CD4-positive, alpha-beta T cell (primary cell): ENCODE measurements at regions of chr15 and their contacts with region 1.

Region 1: DNA sequence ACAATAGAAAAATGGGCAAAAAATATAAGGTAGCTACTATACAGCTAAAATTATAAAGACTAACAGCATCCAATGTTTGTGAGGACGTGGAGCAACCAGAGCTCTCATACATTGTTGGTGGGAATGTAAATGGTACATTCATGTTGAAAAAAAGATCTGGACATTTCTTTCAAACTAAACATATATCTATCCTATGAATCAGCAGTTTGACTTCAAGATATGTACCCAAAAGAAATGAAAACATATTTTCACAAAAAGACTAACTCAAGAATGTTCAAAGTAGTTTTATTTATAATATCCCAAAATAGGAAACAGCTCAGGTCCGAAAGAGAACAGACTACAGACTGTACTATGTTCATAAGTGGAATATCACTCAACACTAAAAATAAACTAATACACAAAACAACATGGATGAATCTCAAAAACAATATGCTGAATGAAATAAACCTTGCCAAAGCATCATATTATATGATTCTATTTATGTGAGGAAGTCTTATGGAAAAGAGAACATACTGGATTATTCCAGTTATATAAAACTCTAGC is 8.8 kb upstream of the TTBK2 start:
- DNase-seq: no peak
- ATAC-seq: no peak
- H3K4me3 ChIP-seq: no peak overlapping the region
- H3K4me3 Mint-ChIP-seq: no peak overlapping the region
- H3K27ac ChIP-seq: no peak overlapping the region
- H3K27ac Mint-ChIP-seq: no peak overlapping the region
- H3K4me1 ChIP-seq: no peaks in the 10 kb centered on the region
- H3K4me1 Mint-ChIP-seq: no peaks in the 10 kb centered on the region
- H3K27me3 ChIP-seq: no peaks in the 10 kb centered on the region
- H3K27me3 Mint-ChIP-seq: no peaks in the 10 kb centered on the region
- CTCF ChIP-seq: no peak

Region 2: GRCh38 chr15:42796955-42797779 is 132.2 kb before region 1 on chr15:
- CTCF ChIA-PET with region 1: interaction called, 3 read pairs
- POLR2A ChIA-PET with region 1: no interaction called
- intact Hi-C with region 1: loop called (anchors 5 kb)
- DNase-seq: no peak
- ATAC-seq: no peak
- H3K4me3 ChIP-seq: no peak overlapping the region
- H3K4me3 Mint-ChIP-seq: no peak overlapping the region
- H3K27ac ChIP-seq: no peak overlapping the region
- H3K27ac Mint-ChIP-seq: no peak overlapping the region
- H3K4me1 ChIP-seq: no peaks in the 10 kb centered on the region
- H3K4me1 Mint-ChIP-seq: no peaks in the 10 kb centered on the region
- H3K27me3 ChIP-seq: no peaks in the 10 kb centered on the region
- H3K27me3 Mint-ChIP-seq: no peaks in the 10 kb centered on the region
- CTCF ChIP-seq: no peak